ENCODE measurements at regions of chrX and their contacts with region 1.

Region 1: DNA sequence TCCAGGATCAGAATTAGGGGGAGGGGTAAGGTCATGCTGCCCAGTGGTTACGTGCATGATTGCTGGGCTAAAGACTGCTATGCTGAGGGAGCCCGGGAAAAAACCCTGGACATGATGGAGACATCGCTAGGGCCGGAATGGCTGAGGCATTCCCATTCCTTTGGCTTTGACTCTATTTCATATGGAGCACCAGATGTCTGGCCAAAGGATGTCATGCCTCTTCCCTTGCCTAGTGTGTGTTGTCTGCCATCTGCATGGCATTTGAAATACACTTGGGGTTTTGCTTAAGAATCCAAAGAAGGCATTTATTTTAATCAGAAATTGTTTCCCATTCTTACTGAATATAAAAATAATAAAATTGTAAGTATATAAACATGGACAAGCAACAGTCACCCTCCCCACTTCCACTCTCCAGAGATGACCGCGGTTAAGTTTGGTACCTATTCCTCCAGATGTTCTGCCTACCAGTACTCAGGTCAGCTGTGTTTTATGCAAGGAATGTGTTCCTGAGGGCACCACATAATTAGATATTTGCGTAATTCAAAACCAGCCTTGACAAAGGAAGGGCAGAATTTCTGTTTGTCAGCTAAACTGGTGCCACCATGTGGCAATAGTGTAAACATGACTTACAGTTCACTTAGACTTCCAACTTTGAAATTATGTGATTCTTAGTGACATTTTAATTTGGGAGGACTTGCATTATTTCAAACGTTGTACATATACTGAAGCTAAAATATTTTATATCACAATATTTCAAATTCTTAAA is 105.9 kb downstream of the CT47B1 start:
- DNase-seq: peak; percentile 85
- H3K4me3 Mint-ChIP-seq: no peak overlapping the region
- H3K27ac Mint-ChIP-seq: peak overlapping the region; percentile 15
- H3K4me1 Mint-ChIP-seq: peaks cover 7% of the 10 kb centered on the region
- H3K27me3 Mint-ChIP-seq: no peaks in the 10 kb centered on the region
- CTCF ChIP-seq: peak; percentile 32

Region 2: GRCh38 chrX:120653000-120653399 is 116.8 kb before region 1 on chrX:
- CTCF ChIA-PET with region 1: no interaction called
- POLR2A ChIA-PET with region 1: no interaction called
- intact Hi-C with region 1: no loop called
- DNase-seq: peak; percentile 43
- H3K4me3 Mint-ChIP-seq: no peak overlapping the region
- H3K27ac Mint-ChIP-seq: no peak overlapping the region
- H3K4me1 Mint-ChIP-seq: no peaks in the 10 kb centered on the region
- H3K27me3 Mint-ChIP-seq: no peaks in the 10 kb centered on the region
- CTCF ChIP-seq: no peak

Region 3: GRCh38 chrX:120664081-120664480 is 105.7 kb before region 1 on chrX:
- CTCF ChIA-PET with region 1: interaction called, 5 read pairs
- POLR2A ChIA-PET with region 1: no interaction called
- intact Hi-C with region 1: loop called (anchors 5 kb)
- DNase-seq: peak; percentile 62
- H3K4me3 Mint-ChIP-seq: no peak overlapping the region
- H3K27ac Mint-ChIP-seq: peak overlapping the region; percentile 47
- H3K4me1 Mint-ChIP-seq: peaks cover 10% of the 10 kb centered on the region
- H3K27me3 Mint-ChIP-seq: no peaks in the 10 kb centered on the region
- CTCF ChIP-seq: peak; percentile 46

Region 4: GRCh38 chrX:121010218-121010617 is 240.5 kb after region 1 on chrX:
- CTCF ChIA-PET with region 1: no interaction called
- POLR2A ChIA-PET with region 1: no interaction called
- intact Hi-C with region 1: no loop called
- DNase-seq: no peak
- H3K4me3 Mint-ChIP-seq: no peak overlapping the region
- H3K27ac Mint-ChIP-seq: no peak overlapping the region
- H3K4me1 Mint-ChIP-seq: no peaks in the 10 kb centered on the region
- H3K27me3 Mint-ChIP-seq: no peaks in the 10 kb centered on the region
- CTCF ChIP-seq: no peak

Region 5: DNA sequence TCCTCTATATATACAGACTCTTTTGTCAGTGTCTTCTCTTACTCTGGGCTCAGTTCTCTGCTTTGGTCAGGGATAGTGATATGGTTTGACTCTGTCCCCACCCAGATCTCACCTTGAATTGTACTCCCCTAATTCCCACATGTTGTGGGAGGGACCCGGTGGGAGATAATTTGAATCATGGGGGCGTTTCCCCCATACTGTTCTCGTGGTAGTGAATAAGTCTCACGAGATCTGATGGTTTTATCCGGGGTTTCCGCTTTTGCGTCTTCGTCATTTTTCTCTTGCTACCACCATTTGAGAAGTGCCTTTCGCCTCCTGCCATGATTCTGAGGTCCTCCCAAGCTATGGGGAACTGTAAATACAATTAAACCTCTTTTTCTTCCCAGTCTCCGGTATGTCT is 422.0 kb after region 1 on chrX:
- CTCF ChIA-PET with region 1: no interaction called
- POLR2A ChIA-PET with region 1: no interaction called
- intact Hi-C with region 1: no loop called
- DNase-seq: no peak
- H3K4me3 Mint-ChIP-seq: no peak overlapping the region
- H3K27ac Mint-ChIP-seq: no peak overlapping the region
- H3K4me1 Mint-ChIP-seq: no peaks in the 10 kb centered on the region
- H3K27me3 Mint-ChIP-seq: no peaks in the 10 kb centered on the region
- CTCF ChIP-seq: no peak

Measured in MCF 10A (cell line).